Ascending aorta (tissue), 2 donors: ENCODE measurements at regions of chr19 and their contacts with region 1.

Region 1: GRCh38 chr19:10979951-10980381 is 19.1 kb downstream of the SMARCA4 start:
- DNase-seq: no peak
- H3K4me3 ChIP-seq: peak overlapping the region in 1 of 2 donors; percentile 46
- H3K27ac ChIP-seq: peak overlapping the region; percentile 50 to 62
- H3K4me1 ChIP-seq: peaks cover 6 to 28% of the 10 kb centered on the region in 2 donors
- H3K27me3 ChIP-seq: no peaks in the 10 kb centered on the region
- CTCF ChIP-seq: peak in 2 of 3 experiments; percentile 28 to 29

Region 2: DNA sequence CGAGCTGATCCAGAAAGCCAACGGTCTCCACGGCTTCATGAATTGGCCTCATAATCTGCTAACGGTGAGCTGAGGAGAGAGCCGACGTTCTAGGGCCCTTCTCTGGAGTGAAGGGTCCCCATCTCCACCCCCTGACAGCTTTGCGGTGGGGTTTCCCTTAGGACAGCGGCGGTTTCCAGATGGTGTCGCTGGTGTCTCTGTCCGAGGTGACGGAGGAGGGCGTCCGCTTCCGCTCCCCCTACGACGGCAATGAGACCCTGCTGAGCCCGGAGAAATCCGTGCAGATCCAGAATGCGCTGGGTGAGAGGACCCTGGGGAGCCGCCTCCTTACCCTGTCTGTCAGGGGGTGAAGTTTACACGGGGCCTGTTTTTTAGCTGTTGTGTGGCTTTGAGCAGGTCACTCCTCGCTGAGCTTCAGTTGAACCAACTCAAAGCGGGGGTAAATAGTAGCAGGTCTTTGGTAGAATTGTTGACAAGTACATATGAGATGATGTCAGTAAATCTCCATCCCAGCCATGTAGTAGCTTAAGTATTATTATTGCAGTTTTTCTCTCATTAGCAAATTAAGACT is 277.9 kb before region 1 on chr19:
- intact Hi-C with region 1: no loop called
- DNase-seq: no peak
- H3K4me3 ChIP-seq: peak overlapping the region; percentile 85 to 88
- H3K27ac ChIP-seq: no peak overlapping the region
- H3K4me1 ChIP-seq: peaks cover 0 to 5% of the 10 kb centered on the region in 2 donors
- H3K27me3 ChIP-seq: no peaks in the 10 kb centered on the region
- CTCF ChIP-seq: no peak

Region 3: GRCh38 chr19:10936661-10937084 is 43.3 kb before region 1 on chr19:
- intact Hi-C with region 1: loop called (anchors 5 kb)
- DNase-seq: no peak
- H3K4me3 ChIP-seq: peak overlapping the region in 1 of 2 donors; percentile 33
- H3K27ac ChIP-seq: no peak overlapping the region
- H3K4me1 ChIP-seq: no peaks in the 10 kb centered on the region
- H3K27me3 ChIP-seq: no peaks in the 10 kb centered on the region
- CTCF ChIP-seq: peak; percentile 59 to 73 (median 66)

Region 4: GRCh38 chr19:10960314-10961072 is 19.5 kb before region 1 on chr19 and contains the start of gene SMARCA4:
- intact Hi-C with region 1: loop called (anchors 1 kb)
- DNase-seq: peak; percentile 75 to 98
- H3K4me3 ChIP-seq: peak within 1 kb of the TSS; percentile 79 to 100
- H3K27ac ChIP-seq: peak within 1 kb of the TSS; percentile 87 to 92
- H3K4me1 ChIP-seq: peaks cover 3 to 10% of the 10 kb centered on the region in 2 donors
- H3K27me3 ChIP-seq: no peaks in the 10 kb centered on the region
- CTCF ChIP-seq: no peak
- total RNA-seq, gene SMARCA4: 89.5 TPM